GM10248 (cell line): ENCODE measurements at regions of chr14 and their contacts with region 1.

Region 1: GRCh38 chr14:65195042-65195719 is 92.9 kb upstream of the MAX start:
- DNase-seq: peak; percentile 60
- CTCF ChIP-seq: no peak

Region 2: DNA sequence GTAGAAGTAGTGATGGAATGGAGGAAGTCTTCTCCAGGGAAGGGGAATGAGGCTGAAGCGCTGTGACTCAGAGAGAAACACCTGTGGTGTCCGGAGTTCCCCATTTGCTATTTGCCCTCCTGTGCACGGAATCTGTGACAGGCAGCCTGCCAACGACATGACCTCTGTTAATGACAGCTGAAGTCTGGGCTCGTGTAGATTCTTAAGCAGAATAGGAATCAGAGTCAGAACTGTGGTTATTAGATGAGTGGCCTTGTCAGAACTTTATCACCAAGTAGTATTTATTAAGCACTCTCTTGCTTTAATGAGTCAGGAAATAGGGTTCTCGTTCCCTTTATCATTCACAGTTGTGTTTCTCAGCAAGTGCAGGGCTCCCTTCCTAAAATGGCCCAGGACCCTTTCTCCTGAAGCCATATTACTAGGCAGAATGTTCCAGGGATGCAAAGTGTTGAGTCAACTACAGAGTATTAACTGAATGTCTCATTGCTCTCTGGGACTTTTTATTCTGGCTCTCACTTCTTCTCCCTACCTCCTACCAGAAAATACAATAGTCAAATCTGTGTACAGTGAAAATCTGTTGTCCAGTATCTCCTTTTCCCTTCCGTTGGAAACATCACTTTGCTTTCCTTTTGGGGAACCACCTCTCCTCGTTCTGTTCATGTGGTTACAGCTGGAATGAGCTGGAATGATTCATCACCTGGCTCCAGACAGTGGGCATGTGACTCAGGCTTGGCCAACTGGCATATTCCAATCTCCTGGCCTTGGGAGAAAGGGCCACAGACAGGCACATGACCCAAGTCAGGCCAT is 15.1 kb before region 1 on chr14:
- CTCF ChIA-PET with region 1: interaction called, 21 read pairs
- POLR2A ChIA-PET with region 1: no interaction called
- DNase-seq: peak; percentile 65
- CTCF ChIP-seq: no peak